ENCODE measurements at regions of chr3 and their contacts with region 1.

Region 1: DNA sequence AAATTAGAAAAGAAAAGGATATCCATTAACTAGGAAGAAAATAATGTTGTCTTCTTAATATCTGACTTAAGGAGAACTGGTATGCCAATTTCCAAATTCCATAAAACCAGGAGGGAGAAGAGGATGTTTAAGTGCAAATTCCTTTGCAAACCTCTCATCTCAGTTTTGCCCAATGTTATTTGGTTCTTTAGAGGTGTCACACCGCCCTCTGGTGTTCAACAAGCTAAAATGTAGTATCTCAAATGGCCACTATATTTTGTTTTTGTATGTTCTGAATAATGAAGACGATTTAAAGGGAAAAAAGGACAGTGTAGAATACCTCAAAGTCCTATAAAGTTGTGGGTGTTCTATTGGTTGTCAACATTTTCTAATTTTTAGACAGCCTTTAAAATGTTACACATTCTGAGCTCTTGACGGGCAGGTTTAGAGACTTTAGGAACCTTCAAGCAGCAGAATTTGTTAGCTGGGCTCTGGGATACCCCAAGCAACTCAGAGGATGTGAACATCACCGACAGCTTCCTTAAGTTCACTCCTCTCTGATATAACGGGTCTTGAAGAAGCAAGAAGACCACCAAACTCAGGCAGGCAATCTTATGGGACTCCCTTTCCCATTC is 458.3 kb downstream of the MFSD1 start:
- DNase-seq: peak; percentile 55 to 72 (median 58)
- ATAC-seq: no peak
- H3K4me3 ChIP-seq: no peak overlapping the region
- H3K27ac ChIP-seq: no peak overlapping the region
- H3K4me1 ChIP-seq: no peaks in the 10 kb centered on the region
- H3K27me3 ChIP-seq: no peaks in the 10 kb centered on the region
- CTCF ChIP-seq: peak in 6 of 7 experiments; percentile 53 to 91 (median 84)
- POLR2A ChIP-seq: no peak

Region 2: GRCh38 chr3:158845765-158846350 is 414.3 kb before region 1 on chr3:
- intact Hi-C with region 1: loop called (anchors 5 kb)
- DNase-seq: peak; percentile 27 to 53 (median 46)
- ATAC-seq: peak; percentile 73
- H3K4me3 ChIP-seq: no peak overlapping the region
- H3K27ac ChIP-seq: no peak overlapping the region
- H3K4me1 ChIP-seq: no peaks in the 10 kb centered on the region
- H3K27me3 ChIP-seq: no peaks in the 10 kb centered on the region
- CTCF ChIP-seq: peak; percentile 52 to 78 (median 73)
- POLR2A ChIP-seq: no peak

Region 3: GRCh38 chr3:159804726-159805410 is 544.7 kb after region 1 on chr3:
- intact Hi-C with region 1: loop called (anchors 10 kb)
- DNase-seq: peak; percentile 60 to 73 (median 70)
- ATAC-seq: peak; percentile 94
- H3K4me3 ChIP-seq: no peak overlapping the region
- H3K27ac ChIP-seq: no peak overlapping the region
- H3K4me1 ChIP-seq: no peaks in the 10 kb centered on the region
- H3K27me3 ChIP-seq: no peaks in the 10 kb centered on the region
- CTCF ChIP-seq: peak; percentile 45 to 82 (median 75)
- POLR2A ChIP-seq: no peak